Mammary epithelial cell (primary cell): ENCODE measurements at regions of chr17 and their contacts with region 1.

Region 1: DNA sequence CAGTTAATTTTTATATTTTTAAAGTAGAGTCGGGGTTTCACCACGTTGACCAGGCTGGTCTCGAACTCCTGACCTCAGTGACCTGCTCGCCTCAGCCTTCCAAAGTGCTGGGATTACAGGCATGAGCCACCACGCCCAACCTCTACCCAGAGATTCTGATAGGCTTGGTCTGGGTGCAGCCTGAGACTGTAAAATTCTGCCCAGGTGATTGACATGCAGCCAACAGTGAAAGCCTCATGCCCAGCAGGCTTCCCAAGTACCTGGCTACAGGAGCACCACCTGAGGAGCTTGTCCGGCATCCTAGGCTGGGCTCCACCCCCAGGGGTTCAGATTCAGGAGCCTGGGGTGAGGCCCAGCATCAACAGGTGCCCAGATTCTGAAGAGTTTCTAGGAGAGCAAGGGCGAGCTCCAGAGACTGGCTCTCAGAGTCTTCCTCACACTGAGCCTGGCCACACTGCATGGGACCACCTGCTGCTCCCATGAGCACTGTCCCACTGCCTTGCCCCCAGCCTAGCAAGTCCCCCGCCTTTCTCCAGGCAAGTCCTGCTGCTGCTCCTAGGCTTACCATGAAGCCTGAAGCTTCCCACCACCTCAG is 16.6 kb downstream of the ZNF385C start:
- DNase-seq: no peak
- H3K4me3 ChIP-seq: no peak overlapping the region
- H3K27ac ChIP-seq: no peak overlapping the region
- H3K4me1 ChIP-seq: peaks cover 5% of the 10 kb centered on the region
- H3K27me3 ChIP-seq: no peaks in the 10 kb centered on the region
- CTCF ChIP-seq: no peak

Region 2: DNA sequence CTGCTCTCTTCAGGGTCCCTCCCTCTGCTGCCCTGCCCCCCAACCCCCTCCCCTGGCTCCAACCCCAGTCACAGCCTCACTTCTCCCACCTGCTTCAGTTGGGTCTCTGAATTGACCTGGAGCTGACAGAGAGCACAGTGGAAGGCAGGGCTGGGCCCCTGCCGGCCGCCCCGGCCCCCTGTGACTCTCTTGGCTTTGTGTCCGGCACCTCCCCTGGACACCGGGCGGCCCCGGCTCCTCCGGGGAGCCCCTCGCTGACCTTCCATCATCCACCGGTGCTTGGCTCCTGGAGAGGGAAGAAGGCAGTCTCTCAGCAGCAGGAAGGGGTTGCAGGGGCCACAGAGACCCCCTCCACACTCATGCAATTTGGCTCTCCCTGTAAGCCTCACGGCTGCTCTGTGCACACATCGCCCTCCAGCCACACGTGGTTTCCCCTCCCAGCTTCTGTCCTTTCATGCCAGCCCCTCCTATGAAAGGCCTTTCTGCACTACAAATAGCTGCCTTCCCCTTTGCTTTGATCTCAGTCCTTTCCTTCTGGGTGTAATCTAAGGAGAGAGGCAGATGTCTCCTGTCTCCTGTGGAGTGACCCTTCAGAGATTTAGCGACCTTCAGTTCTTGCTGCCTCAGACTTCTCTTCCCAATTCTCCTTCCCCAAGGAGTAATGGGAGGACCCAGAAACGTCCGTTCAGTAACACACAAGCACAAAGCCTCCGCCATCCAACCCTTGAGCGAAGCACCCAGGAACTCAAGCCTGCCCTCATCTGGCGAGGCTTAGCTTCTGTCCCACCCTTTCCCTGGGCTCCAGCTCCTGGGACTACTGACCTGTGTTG is 53.5 kb before region 1 on chr17:
- CTCF ChIA-PET with region 1: interaction called, 5 read pairs
- dilution Hi-C with region 1: loop called (anchors 5 kb)
- in situ Hi-C with region 1: no loop called
- intact Hi-C with region 1: no loop called
- DNase-seq: no peak
- H3K4me3 ChIP-seq: no peak overlapping the region
- H3K27ac ChIP-seq: no peak overlapping the region
- H3K4me1 ChIP-seq: peaks cover 12% of the 10 kb centered on the region
- H3K27me3 ChIP-seq: no peaks in the 10 kb centered on the region
- CTCF ChIP-seq: no peak

Region 3: DNA sequence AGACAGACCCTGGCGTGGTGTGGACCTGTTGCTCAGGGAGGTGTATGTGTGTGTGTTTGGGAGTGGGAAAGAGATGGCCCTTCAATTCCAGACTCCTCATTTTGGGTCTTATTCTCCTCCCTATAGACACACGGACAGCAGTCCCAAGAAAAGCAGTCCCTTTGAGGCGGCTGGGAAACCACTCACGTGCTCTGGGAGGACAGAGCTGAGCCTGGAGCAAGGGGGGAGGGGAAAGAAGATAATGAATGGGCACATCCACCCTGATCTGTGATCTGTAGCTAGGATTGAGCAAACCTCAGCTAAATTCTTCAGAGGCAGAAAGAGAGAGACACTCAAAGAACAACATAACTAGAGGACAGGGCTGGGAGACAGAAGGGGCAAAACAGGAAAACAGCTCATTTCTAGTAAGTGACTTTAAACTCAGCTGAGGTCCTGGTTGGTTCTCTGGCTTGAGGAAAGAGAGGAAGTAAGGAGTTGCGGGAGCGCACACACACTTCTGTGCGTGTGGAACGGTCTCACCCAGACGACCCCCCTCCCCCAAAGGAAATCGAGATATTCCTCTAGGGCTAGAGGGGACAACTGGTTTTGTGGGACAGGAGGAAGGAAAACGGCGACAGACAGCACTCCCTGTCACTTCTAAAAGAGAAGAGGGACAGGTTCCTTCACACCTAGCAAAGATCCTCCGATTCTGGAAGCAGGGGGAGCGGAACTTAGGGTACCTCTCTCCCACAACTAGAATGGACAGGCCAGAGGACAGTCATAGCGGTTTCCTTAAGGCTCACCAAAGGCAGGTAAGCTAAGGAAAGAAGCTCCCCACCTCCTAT is 72.5 kb after region 1 on chr17:
- CTCF ChIA-PET with region 1: no interaction called
- dilution Hi-C with region 1: loop called (anchors 5 kb)
- in situ Hi-C with region 1: no loop called
- intact Hi-C with region 1: no loop called
- DNase-seq: no peak
- H3K4me3 ChIP-seq: peak overlapping the region; percentile 57 to 80 (median 69)
- H3K27ac ChIP-seq: peak overlapping the region; percentile 37
- H3K4me1 ChIP-seq: peaks cover 10% of the 10 kb centered on the region
- H3K27me3 ChIP-seq: no peaks in the 10 kb centered on the region
- CTCF ChIP-seq: no peak

Region 4: GRCh38 chr17:42183741-42184711 is 102.4 kb after region 1 on chr17:
- CTCF ChIA-PET with region 1: no interaction called
- dilution Hi-C with region 1: loop called (anchors 5 kb)
- in situ Hi-C with region 1: no loop called
- intact Hi-C with region 1: no loop called
- DNase-seq: peak; percentile 12
- H3K4me3 ChIP-seq: peak overlapping the region in 2 of 3 experiments; percentile 35 to 39
- H3K27ac ChIP-seq: no peak overlapping the region
- H3K4me1 ChIP-seq: peaks cover 21% of the 10 kb centered on the region
- H3K27me3 ChIP-seq: peaks cover 12% of the 10 kb centered on the region
- CTCF ChIP-seq: peak; percentile 39 to 47

Region 5: DNA sequence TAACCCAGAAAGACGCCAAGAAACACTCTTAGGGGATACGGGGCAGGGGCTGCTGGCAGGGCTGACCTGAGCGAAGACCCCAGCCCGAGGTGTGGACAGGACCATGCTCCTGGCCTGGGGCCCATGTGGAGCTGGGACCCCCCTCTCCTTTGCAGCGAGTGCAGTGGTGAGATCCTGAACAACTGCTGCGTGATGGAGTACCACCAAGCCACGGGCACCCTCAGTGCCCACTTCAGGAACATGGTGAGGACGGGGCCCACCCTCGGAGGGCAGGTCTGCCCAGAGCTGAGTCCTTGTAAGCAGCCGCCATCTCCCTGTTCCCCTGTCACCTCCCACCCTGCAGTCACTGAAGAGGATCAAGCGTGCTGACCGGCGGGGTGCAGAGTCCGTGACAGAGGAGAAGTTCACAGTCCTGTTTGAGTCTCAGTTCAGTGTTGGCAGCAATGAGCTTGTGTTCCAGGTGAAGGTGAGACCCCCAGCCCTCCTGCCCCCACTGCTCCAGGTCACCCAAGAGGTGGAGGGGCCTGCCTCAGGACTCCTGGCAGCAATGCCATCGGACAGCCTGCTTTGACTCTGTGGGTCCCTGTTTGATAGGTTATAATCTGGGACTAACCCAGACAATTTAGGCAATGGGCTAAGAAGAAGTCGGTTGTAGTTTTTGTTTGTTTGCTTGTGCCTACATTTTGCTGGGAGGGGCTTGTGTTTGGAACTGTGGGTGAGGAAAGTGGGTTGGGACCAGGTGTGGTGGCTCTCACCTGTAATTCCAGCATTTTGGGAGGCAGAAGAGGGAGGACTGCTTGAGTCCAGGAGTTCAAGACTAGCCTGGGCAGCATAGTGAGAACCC is 222.8 kb after region 1 on chr17:
- CTCF ChIA-PET with region 1: no interaction called
- dilution Hi-C with region 1: loop called (anchors 5 kb)
- in situ Hi-C with region 1: no loop called
- intact Hi-C with region 1: no loop called
- DNase-seq: no peak
- H3K4me3 ChIP-seq: no peak overlapping the region
- H3K27ac ChIP-seq: no peak overlapping the region
- H3K4me1 ChIP-seq: no peaks in the 10 kb centered on the region
- H3K27me3 ChIP-seq: no peaks in the 10 kb centered on the region
- CTCF ChIP-seq: no peak